ENCODE measurements at regions of chr4 and their contacts with region 1.

Region 1: DNA sequence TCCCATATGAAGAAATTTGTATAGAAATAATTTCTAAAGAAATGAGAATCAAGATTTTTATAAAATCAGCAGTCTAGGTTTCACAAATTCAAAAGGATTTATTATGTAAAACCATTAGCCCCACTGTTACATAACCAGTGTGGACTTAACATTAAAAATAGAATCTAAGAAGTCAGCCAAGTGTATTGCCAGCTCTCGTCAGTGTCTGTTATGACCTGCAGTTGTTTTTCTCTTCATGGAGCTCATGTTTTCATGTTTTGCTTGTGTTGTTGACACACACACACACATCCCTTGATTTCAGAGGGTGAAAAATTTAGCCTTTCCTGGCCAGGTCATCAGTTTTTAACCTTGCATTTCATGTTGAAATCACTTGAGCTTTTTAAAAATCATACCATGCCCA is 39.5 kb downstream of the USP38 start:
- DNase-seq: peak in 1 of 2 experiments; percentile 2
- H3K4me3 ChIP-seq: no peak overlapping the region
- H3K4me3 Mint-ChIP-seq: peak overlapping the region; percentile 62
- H3K27ac Mint-ChIP-seq: peak overlapping the region; percentile 94
- H3K4me1 ChIP-seq: peaks cover 49% of the 10 kb centered on the region
- H3K4me1 Mint-ChIP-seq: peaks cover 20% of the 10 kb centered on the region
- H3K27me3 ChIP-seq: no peaks in the 10 kb centered on the region
- H3K27me3 Mint-ChIP-seq: no peaks in the 10 kb centered on the region
- CTCF ChIP-seq: no peak

Region 2: GRCh38 chr4:143163618-143164017 is 60.6 kb before region 1 on chr4:
- CTCF ChIA-PET with region 1: no interaction called
- POLR2A ChIA-PET with region 1: no interaction called
- intact Hi-C with region 1: no loop called
- DNase-seq: no peak
- H3K4me3 ChIP-seq: no peak overlapping the region
- H3K4me3 Mint-ChIP-seq: no peak overlapping the region
- H3K27ac Mint-ChIP-seq: no peak overlapping the region
- H3K4me1 ChIP-seq: no peaks in the 10 kb centered on the region
- H3K4me1 Mint-ChIP-seq: no peaks in the 10 kb centered on the region
- H3K27me3 ChIP-seq: no peaks in the 10 kb centered on the region
- H3K27me3 Mint-ChIP-seq: no peaks in the 10 kb centered on the region
- CTCF ChIP-seq: no peak

Region 3: GRCh38 chr4:143248827-143249226 is 24.6 kb after region 1 on chr4:
- CTCF ChIA-PET with region 1: no interaction called
- POLR2A ChIA-PET with region 1: no interaction called
- intact Hi-C with region 1: loop called (anchors 1 kb)
- DNase-seq: no peak
- H3K4me3 ChIP-seq: no peak overlapping the region
- H3K4me3 Mint-ChIP-seq: no peak overlapping the region
- H3K27ac Mint-ChIP-seq: no peak overlapping the region
- H3K4me1 ChIP-seq: no peaks in the 10 kb centered on the region
- H3K4me1 Mint-ChIP-seq: no peaks in the 10 kb centered on the region
- H3K27me3 ChIP-seq: no peaks in the 10 kb centered on the region
- H3K27me3 Mint-ChIP-seq: no peaks in the 10 kb centered on the region
- CTCF ChIP-seq: no peak

Region 4: DNA sequence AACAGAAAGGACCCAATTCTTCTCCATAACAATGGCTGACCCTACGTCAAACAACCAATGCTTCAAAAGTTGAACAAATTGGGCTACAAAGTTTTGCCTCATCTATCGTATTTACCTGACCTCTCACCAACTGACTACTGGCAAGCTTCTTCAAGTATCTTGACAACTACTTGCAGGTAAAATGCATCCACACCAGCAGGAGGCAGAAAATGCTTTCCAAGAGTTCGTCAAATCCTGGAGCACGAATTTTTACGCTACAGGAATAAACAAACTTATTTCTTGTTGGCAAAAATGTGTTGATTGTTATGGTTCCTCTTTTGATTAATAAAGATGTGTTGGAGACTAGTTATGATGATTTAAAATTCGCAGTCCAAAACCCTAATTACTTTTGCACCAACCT is 105.7 kb after region 1 on chr4:
- CTCF ChIA-PET with region 1: no interaction called
- POLR2A ChIA-PET with region 1: no interaction called
- intact Hi-C with region 1: loop called (anchors 1 kb)
- DNase-seq: no peak
- H3K4me3 ChIP-seq: no peak overlapping the region
- H3K4me3 Mint-ChIP-seq: no peak overlapping the region
- H3K27ac Mint-ChIP-seq: no peak overlapping the region
- H3K4me1 ChIP-seq: peaks cover 32% of the 10 kb centered on the region
- H3K4me1 Mint-ChIP-seq: peaks cover 18% of the 10 kb centered on the region
- H3K27me3 ChIP-seq: no peaks in the 10 kb centered on the region
- H3K27me3 Mint-ChIP-seq: no peaks in the 10 kb centered on the region
- CTCF ChIP-seq: no peak

Region 5: DNA sequence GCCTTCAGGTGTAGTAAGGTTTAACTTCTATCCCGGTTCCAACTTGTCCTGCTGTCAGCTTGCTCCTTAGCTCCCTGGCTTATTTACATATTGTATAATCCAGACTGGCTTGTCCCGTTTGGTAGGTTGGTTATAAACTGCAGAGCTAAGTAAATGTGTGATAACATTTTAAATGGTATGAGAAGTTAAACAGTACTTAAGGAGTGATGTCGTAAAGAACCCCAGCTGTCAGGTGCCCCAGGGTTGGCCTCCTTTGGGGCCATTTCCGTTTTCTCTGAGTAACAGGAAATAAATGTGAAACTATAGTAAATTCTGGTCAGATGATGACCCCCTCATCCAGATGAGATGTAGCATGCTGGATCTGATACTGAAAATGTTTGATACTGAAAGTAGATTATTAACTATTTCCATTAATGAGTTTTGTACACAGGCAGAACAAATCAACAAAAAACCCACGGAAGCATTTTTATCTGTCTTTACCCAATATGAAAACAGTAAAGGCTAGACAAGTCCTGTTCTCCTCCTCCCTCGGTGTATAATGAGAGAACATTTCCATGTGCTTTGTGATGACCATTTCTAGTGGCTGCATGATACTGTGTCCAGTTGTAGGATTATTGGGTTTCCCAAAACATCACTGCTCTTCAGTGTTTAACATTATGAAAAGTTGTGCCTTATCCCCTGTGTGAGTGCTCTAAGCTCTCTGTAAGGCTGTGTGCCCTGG is 134.8 kb after region 1 on chr4:
- CTCF ChIA-PET with region 1: no interaction called
- POLR2A ChIA-PET with region 1: no interaction called
- intact Hi-C with region 1: loop called (anchors 1 kb)
- DNase-seq: peak; percentile 81 to 86
- H3K4me3 ChIP-seq: no peak overlapping the region
- H3K4me3 Mint-ChIP-seq: peak overlapping the region; percentile 70
- H3K27ac Mint-ChIP-seq: peak overlapping the region; percentile 84
- H3K4me1 ChIP-seq: peaks cover 65% of the 10 kb centered on the region
- H3K4me1 Mint-ChIP-seq: peaks cover 46% of the 10 kb centered on the region
- H3K27me3 ChIP-seq: no peaks in the 10 kb centered on the region
- H3K27me3 Mint-ChIP-seq: no peaks in the 10 kb centered on the region
- CTCF ChIP-seq: no peak

Measured in Caco-2 (cell line).